ENCODE measurements at regions of chr3 and their contacts with region 1.

Region 1: GRCh38 chr3:57810471-57811137 is 54.5 kb downstream of the SLMAP start:
- DNase-seq: no peak
- CTCF ChIP-seq: no peak

Region 2: DNA sequence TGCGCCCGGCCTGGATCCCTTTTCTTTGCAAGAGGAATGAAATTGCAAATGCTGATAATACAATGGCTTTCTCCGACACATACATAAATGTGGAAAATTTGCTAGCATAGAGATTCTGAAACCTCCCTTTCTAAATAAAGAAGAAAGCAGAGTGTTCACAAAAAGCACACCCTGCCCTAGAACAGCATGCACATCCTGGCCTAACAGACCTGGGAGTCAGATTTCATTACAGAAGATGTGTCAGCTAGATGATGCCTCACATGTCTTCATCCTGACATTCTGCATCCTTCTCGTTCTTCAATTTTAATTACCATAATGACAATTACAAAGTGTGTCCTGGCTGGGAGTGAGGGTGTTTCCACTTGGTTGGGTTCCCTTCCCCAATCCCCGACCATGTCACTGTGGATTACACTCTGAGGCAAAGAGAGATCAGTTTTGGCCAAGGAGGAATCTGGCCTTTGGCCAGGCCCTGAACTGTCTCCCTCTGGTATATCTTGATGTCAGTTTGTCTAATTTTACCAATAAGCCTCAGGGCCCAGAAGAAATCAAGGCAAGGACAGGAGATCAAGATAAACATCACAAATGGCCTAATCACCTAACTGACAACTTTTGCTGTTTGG is 855.0 kb before region 1 on chr3:
- CTCF ChIA-PET with region 1: no interaction called
- POLR2A ChIA-PET with region 1: no interaction called
- DNase-seq: no peak
- CTCF ChIP-seq: no peak

Region 3: GRCh38 chr3:57778494-57778893 is 32.1 kb before region 1 on chr3:
- CTCF ChIA-PET with region 1: no interaction called
- POLR2A ChIA-PET with region 1: no interaction called
- DNase-seq: no peak
- CTCF ChIP-seq: no peak

Region 4: GRCh38 chr3:57796261-57796660 is 14.3 kb before region 1 on chr3:
- CTCF ChIA-PET with region 1: interaction called, 21 read pairs
- POLR2A ChIA-PET with region 1: no interaction called
- DNase-seq: no peak
- CTCF ChIP-seq: no peak

Measured in GM10248 (cell line).